Posterior cingulate gyrus (tissue), 11 donors: ENCODE measurements at regions of chr6 and their contacts with region 1.

Region 1: GRCh38 chr6:123888771-123889513 is 85.3 kb downstream of the NKAIN2 start:
- DNase-seq: peak in 4 of 10 donors; percentile 8 to 78 (median 26)

Region 2: DNA sequence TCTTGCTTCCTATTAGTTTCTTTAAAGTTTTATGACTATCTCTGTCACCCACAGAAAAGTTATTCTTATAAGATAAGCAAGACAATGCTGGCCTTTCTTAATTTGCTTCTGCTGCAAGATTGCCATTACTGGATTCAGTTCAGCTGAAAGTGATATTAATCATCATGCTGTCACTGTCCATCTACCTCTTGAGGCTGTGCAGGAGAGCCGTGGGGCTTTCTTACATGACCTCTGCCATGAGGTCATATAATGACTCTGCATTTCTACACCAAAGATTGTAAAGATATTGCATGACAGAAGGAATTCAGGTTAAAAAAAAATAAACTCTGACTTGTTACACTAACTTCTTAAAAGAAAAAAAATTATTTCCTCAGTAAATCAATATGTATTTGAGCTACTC is 359.1 kb before region 1 on chr6:
- intact Hi-C with region 1: no loop called
- DNase-seq: no peak

Region 3: GRCh38 chr6:123808556-123808955 is 80.4 kb before region 1 on chr6:
- intact Hi-C with region 1: loop called (anchors 5 kb)
- DNase-seq: peak; percentile 15 to 92 (median 58)

Region 4: DNA sequence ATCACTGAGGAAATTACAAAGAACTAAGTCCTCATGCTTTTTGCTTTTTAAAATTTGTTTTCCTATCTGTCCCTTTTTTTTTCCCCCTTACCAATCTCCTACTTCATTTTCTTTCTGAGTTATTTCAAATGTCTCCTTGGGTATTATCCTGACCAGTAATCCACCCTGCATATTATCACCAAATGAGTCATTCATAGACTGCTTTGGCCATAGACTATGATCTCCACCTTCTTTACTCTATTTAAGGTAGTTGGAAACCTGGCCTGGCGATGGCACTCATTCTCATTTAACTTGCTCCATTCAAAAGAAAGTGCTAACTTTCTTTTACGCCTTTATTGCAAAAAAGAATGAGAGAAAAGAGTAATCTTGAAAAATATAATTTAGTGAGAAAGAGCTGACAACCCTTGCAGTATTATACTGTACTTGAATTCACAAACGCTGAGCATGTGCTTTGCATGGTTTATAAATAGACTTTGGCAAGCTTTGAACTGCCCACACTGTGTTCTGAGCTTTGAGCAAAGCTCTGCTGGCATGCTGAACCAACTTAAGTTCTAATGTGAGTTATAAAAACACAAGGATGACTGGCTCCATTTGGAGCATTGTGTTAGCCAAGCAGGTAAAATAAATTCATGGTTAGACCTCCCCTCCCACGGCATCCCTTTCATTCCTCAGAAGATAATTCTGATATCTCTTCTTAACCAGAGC is 113.6 kb after region 1 on chr6:
- intact Hi-C with region 1: no loop called
- DNase-seq: peak in 4 of 10 donors; percentile 8 to 61 (median 25)

Region 5: DNA sequence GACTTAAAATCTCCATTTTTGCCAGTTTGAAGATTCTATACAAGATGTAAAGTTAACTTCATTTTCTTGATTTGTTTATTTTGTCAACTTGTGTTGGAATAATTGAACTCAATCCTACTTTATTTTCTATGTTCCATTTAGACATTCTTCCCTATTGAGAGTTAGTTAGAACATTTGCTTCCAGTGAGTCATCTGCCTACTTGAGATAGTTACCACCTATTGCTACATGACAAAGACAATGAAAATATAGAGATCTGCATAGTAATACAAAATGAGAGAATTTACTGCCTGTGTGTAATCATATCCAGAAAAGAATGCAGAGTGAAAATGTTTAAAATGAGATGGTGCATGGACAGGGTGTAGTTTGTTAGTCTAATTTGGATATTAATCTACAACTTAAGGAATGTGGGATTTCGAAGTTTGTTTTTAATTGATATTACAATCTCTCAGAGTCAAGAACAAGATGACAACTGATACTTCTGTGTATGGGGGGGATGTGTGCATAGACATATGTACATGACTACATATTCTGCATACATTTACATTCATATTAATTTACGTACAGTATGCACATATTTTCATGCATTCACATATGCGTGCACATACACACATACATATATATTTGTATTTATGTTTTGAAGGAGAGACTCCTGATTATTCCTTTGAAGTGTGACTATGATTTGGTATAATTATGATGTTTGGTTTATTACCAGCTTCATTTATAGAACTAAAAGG is 334.8 kb after region 1 on chr6:
- intact Hi-C with region 1: no loop called
- DNase-seq: no peak